HEK293T (cell line): ENCODE measurements at regions of chr18 and their contacts with region 1.

Region 1: DNA sequence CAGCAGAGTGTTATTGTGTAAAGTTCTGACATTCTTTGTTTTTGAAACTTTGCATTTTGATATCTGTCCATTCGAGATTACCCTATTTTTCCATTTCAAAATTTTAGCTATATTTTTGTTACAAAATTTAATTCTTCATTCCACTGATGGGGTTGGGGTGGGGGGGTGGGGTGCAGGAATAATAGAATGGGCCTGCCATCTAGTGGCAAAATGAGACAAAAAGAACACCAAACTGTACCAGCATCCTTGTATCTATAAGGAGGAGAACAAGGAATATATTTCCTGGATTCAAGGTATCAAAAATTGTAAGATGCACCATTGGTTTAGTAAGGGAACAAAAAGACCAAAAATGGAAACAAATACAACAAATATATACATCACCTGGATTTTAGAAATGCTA is 27.9 kb upstream of the TTR start:
- DNase-seq: no peak

Region 2: DNA sequence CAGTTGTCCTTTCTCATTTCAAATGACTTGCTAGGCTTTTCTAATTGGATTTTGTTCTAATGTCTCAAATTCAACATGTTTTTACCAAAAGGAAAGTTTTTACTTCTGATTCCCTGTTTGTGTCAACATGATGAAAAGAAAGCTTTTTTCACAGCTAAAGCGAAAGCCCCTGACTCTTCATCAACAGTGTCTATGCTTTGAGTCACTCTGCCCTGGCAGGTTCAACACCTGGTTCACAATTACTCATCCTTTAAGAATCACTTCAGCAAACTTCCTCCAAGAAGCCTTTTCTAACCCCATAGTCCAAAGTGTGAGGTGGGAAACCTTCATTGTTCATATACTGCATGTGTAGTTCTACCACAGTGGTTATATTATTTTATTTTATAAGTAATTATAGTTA is 73.4 kb before region 1 on chr18:
- CTCF ChIA-PET with region 1: no interaction called
- POLR2A ChIA-PET with region 1: no interaction called
- DNase-seq: no peak

Region 3: GRCh38 chr18:31506024-31506742 is 57.6 kb before region 1 on chr18:
- CTCF ChIA-PET with region 1: no interaction called
- POLR2A ChIA-PET with region 1: no interaction called
- DNase-seq: no peak

Region 4: DNA sequence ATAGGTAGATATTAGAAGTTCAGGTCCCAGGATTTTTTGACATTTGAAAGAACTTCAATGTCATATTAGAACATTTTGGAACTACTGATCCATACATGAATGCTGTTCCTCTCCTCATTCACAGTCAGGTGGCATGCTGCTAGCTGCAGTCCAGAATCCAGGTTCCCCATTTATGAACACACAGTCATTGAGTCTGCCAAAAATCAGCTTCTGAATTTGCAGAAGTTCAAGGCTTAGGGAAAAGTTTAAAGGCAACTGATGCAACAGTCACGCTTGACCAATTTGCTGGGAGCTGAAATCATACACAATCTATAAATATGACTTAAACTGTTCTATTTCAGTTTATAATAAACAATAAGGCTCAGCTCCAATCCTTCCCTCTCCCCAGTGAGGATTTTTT is 10.6 kb after region 1 on chr18:
- CTCF ChIA-PET with region 1: interaction called, 10 read pairs
- POLR2A ChIA-PET with region 1: no interaction called
- DNase-seq: no peak